Activated B cell treated with CpG ODN at 0.5 μM for 24 hours (primary cell): ENCODE measurements at regions of chr5 and their contacts with region 1.

Region 1: DNA sequence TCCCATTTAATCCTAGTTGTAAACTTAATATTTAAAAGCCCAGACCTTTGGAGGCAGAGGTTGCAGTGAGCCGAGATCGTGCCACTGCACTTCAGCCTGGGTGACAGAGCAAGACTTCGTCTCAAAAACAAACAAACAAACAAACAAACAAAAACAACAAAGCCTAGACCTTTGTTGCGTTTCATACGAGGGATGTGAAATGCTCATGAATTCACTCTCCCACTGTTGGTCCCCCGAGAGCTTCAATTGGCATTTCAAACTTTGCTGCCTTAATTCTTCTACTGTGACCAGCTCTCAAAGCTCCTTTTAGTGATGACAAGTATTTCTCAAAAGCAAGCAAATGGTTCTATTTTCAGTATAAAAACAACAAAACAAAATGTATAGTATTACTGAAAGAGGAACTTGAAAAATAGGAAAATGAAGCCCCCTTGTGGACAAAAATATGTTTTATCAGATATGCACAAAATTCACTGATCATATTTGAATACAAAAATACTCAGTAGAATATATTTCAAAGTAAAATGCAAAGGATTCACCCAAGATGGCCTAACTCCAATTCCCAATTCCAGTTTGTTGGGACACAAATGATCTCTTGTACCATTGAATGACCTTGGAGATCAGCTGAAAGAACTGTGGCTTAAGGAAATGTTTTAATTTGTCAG is 140.4 kb downstream of the ESM1 start:
- DNase-seq: no peak
- ATAC-seq: peak; percentile 50
- H3K4me3 Mint-ChIP-seq: peak overlapping the region; percentile 69
- H3K27ac Mint-ChIP-seq: peak overlapping the region; percentile 67
- H3K4me1 Mint-ChIP-seq: peaks cover 23% of the 10 kb centered on the region
- H3K27me3 Mint-ChIP-seq: peaks cover 7% of the 10 kb centered on the region
- CTCF ChIP-seq: peak; percentile 28

Region 2: GRCh38 chr5:54443270-54443669 is 401.8 kb before region 1 on chr5:
- CTCF ChIA-PET with region 1: interaction called, 3 read pairs
- POLR2A ChIA-PET with region 1: no interaction called
- intact Hi-C with region 1: loop called (anchors 5 kb)
- DNase-seq: no peak
- ATAC-seq: no peak
- H3K4me3 Mint-ChIP-seq: no peak overlapping the region
- H3K27ac Mint-ChIP-seq: no peak overlapping the region
- H3K4me1 Mint-ChIP-seq: peaks cover 23% of the 10 kb centered on the region
- H3K27me3 Mint-ChIP-seq: no peaks in the 10 kb centered on the region
- CTCF ChIP-seq: no peak

Region 3: GRCh38 chr5:54610197-54610944 is 234.7 kb before region 1 on chr5:
- CTCF ChIA-PET with region 1: interaction called, 9 read pairs
- POLR2A ChIA-PET with region 1: no interaction called
- intact Hi-C with region 1: loop called (anchors 5 kb)
- DNase-seq: no peak
- ATAC-seq: peak; percentile 94
- H3K4me3 Mint-ChIP-seq: peak overlapping the region; percentile 55
- H3K27ac Mint-ChIP-seq: peak overlapping the region; percentile 71
- H3K4me1 Mint-ChIP-seq: peaks cover 50% of the 10 kb centered on the region
- H3K27me3 Mint-ChIP-seq: no peaks in the 10 kb centered on the region
- CTCF ChIP-seq: no peak

Region 4: GRCh38 chr5:54753034-54753433 is 92.0 kb before region 1 on chr5:
- CTCF ChIA-PET with region 1: interaction called, 10 read pairs
- POLR2A ChIA-PET with region 1: no interaction called
- intact Hi-C with region 1: no loop called
- DNase-seq: no peak
- ATAC-seq: peak; percentile 90
- H3K4me3 Mint-ChIP-seq: peak overlapping the region; percentile 72
- H3K27ac Mint-ChIP-seq: peak overlapping the region; percentile 81
- H3K4me1 Mint-ChIP-seq: peaks cover 60% of the 10 kb centered on the region
- H3K27me3 Mint-ChIP-seq: no peaks in the 10 kb centered on the region
- CTCF ChIP-seq: no peak

Region 5: GRCh38 chr5:54774281-54775170 is 70.5 kb before region 1 on chr5:
- CTCF ChIA-PET with region 1: interaction called, 6 read pairs
- POLR2A ChIA-PET with region 1: no interaction called
- intact Hi-C with region 1: loop called (anchors 2 kb)
- DNase-seq: no peak
- ATAC-seq: peak; percentile 16
- H3K4me3 Mint-ChIP-seq: no peak overlapping the region
- H3K27ac Mint-ChIP-seq: no peak overlapping the region
- H3K4me1 Mint-ChIP-seq: peaks cover 62% of the 10 kb centered on the region
- H3K27me3 Mint-ChIP-seq: no peaks in the 10 kb centered on the region
- CTCF ChIP-seq: no peak

Region 6: DNA sequence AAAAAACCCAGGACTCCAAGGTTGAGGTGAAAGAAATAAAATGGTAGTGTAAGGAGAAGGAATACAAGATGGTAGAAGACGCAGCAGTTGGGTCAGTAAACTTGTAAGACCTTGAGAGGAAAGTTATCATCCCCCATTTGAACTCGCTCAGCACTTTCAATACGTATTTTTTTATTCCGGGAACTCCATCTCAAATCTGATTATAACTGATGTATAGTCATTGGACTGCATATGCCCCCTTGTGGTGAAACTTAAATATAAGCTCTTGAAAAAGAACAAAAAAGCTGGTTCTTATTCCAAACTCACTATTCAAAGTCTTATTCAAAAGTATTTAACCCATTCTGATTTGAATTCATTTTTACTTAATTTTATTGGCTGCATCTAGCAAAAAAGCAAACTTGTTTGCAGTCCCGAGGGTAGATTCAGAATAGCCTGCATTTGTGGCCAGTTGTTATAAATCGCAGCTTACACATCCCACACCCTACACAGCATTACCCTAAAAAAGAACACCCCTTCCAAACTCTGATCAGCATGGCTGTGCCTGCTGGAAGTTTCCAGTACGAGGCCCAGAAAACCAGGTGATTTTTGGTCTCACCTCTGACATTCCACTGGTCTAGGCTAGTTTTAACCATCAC is 22.4 kb after region 1 on chr5:
- CTCF ChIA-PET with region 1: interaction called, 33 read pairs
- POLR2A ChIA-PET with region 1: interaction called, 3 read pairs
- intact Hi-C with region 1: loop called (anchors 1 kb)
- DNase-seq: no peak
- ATAC-seq: peak; percentile 77
- H3K4me3 Mint-ChIP-seq: peak overlapping the region; percentile 53
- H3K27ac Mint-ChIP-seq: no peak overlapping the region
- H3K4me1 Mint-ChIP-seq: peaks cover 4% of the 10 kb centered on the region
- H3K27me3 Mint-ChIP-seq: peaks cover 29% of the 10 kb centered on the region
- CTCF ChIP-seq: no peak

Region 7: GRCh38 chr5:54927097-54927746 is 82.2 kb after region 1 on chr5:
- CTCF ChIA-PET with region 1: no interaction called
- POLR2A ChIA-PET with region 1: no interaction called
- intact Hi-C with region 1: no loop called
- DNase-seq: no peak
- ATAC-seq: no peak
- H3K4me3 Mint-ChIP-seq: no peak overlapping the region
- H3K27ac Mint-ChIP-seq: no peak overlapping the region
- H3K4me1 Mint-ChIP-seq: no peaks in the 10 kb centered on the region
- H3K27me3 Mint-ChIP-seq: no peaks in the 10 kb centered on the region
- CTCF ChIP-seq: no peak

Region 8: GRCh38 chr5:54959673-54960418 is 114.8 kb after region 1 on chr5:
- CTCF ChIA-PET with region 1: no interaction called
- POLR2A ChIA-PET with region 1: no interaction called
- intact Hi-C with region 1: no loop called
- DNase-seq: no peak
- ATAC-seq: no peak
- H3K4me3 Mint-ChIP-seq: no peak overlapping the region
- H3K27ac Mint-ChIP-seq: no peak overlapping the region
- H3K4me1 Mint-ChIP-seq: no peaks in the 10 kb centered on the region
- H3K27me3 Mint-ChIP-seq: peaks cover 28% of the 10 kb centered on the region
- CTCF ChIP-seq: no peak

Region 9: GRCh38 chr5:55467862-55468551 is 623.0 kb after region 1 on chr5:
- CTCF ChIA-PET with region 1: no interaction called
- POLR2A ChIA-PET with region 1: no interaction called
- intact Hi-C with region 1: no loop called
- DNase-seq: no peak
- ATAC-seq: no peak
- H3K4me3 Mint-ChIP-seq: no peak overlapping the region
- H3K27ac Mint-ChIP-seq: no peak overlapping the region
- H3K4me1 Mint-ChIP-seq: no peaks in the 10 kb centered on the region
- H3K27me3 Mint-ChIP-seq: no peaks in the 10 kb centered on the region
- CTCF ChIP-seq: no peak